ENCODE measurements at regions of chr14 and their contacts with region 1.

Region 1: DNA sequence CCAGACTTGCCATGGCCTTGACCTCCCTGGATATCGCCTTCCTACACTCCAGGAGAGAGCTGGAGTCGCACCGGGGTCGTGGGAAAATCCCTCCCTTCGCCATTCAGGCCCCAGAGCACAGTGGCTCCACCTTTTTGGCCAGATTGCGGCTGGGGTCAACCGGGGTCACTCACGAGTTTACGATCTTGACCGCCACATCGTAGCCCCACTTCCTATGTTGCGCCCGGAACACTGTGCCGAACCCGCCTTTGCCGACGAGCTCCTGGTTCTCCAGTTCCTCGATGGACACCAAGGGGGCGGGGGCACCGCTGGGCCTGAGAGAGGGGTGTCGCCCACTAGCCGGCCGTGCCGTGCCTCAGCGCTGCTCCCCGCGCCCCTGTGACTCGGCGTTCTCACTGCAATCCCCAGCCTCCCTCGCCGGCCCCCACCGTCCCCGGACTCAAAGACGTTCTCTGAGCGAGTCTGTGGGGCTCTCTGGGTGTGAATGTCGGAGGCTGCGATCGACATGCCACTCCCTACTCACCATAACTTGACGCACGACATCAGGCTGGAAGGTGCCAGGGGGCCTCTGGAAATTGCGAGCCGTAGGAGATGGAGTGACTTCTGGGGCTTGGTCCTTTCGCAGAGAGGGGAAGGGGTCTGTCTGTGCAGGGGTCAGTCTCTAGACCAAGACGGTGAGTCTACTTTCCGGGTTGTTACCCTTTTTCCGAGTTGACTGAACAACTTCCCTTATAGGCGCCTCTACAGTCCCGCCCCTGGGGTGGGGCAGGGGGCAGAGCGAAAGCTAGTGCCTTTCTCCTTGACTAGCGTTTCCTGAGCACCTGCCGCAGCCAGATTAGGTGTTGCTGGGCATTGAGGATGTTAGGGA is at the start of gene RIPK3:
- DNase-seq: peak in 2 of 3 donors; percentile 62 to 74
- H3K4me3 ChIP-seq: peak within 1 kb of the TSS; percentile 43 to 91 (median 75)
- H3K27ac ChIP-seq: peak within 1 kb of the TSS in 1 of 2 experiments; percentile 53
- H3K4me1 ChIP-seq: peaks cover 7 to 40% (median 38%) of the 10 kb centered on the region in 4 experiments
- H3K27me3 ChIP-seq: peaks cover 0 to 10% (median 2%) of the 10 kb centered on the region in 5 experiments

Region 2: DNA sequence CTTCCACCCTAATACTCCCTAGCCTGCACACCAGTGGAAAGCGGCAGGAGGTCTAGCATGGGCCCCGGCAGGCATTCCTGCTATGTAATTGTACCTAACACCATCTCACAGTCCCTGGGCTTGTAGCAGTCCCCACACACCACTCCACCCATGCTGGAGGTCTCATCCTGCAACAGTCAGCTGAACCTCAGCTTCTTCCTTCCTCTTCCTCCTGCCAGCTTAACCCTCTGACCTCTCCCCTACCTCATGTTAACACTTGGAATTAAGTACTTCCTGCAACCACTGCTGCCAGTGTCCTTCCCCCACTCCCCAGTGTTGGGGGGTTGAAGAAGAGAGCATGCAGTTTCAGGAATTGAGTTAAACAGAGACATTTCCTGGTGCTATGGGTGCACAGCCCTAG is 12.2 kb before region 1 on chr14:
- CTCF ChIA-PET with region 1: interaction called, 36 read pairs
- POLR2A ChIA-PET with region 1: interaction called, 3 read pairs
- DNase-seq: no peak
- H3K4me3 ChIP-seq: peak overlapping the region in 2 of 7 experiments; percentile 28
- H3K27ac ChIP-seq: no peak overlapping the region
- H3K4me1 ChIP-seq: peaks cover 9 to 59% (median 45%) of the 10 kb centered on the region in 4 experiments
- H3K27me3 ChIP-seq: peaks cover 0 to 5% (median under 1%) of the 10 kb centered on the region in 5 experiments

Region 3: DNA sequence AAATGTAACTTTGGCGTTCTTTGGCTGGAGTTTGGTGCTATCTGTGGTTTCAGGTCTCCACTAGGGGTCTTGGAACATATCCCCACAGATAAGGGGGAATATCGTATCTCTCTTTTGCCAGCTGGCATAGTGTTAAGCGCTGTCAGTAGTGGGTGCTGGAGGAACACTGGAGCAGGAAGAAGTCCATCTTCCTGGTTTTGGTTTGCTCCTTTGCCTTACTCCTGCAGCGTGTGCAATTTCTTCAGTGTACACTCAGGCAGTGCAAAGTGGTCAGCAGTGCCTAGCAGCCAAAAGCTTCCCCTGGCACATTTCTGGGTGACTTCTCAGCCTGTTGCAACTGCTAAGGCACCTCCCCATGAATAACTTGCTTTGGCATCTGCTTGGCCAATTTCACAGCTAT is 12.0 kb after region 1 on chr14:
- CTCF ChIA-PET with region 1: interaction called, 36 read pairs
- POLR2A ChIA-PET with region 1: interaction called, 4 read pairs
- DNase-seq: peak in 2 of 3 donors; percentile 33 to 47
- H3K4me3 ChIP-seq: no peak overlapping the region
- H3K27ac ChIP-seq: no peak overlapping the region
- H3K4me1 ChIP-seq: no peaks in the 10 kb centered on the region
- H3K27me3 ChIP-seq: peaks cover 0 to 2% (median 0%) of the 10 kb centered on the region in 5 experiments

Region 4: GRCh38 chr14:24504425-24504950 is 165.0 kb after region 1 on chr14:
- CTCF ChIA-PET with region 1: no interaction called
- POLR2A ChIA-PET with region 1: no interaction called
- DNase-seq: no peak
- H3K4me3 ChIP-seq: no peak overlapping the region
- H3K27ac ChIP-seq: no peak overlapping the region
- H3K4me1 ChIP-seq: peaks cover 0 to 10% (median 4%) of the 10 kb centered on the region in 4 experiments
- H3K27me3 ChIP-seq: no peaks in the 10 kb centered on the region